ENCODE measurements at regions of chr12 and their contacts with region 1.

Region 1: DNA sequence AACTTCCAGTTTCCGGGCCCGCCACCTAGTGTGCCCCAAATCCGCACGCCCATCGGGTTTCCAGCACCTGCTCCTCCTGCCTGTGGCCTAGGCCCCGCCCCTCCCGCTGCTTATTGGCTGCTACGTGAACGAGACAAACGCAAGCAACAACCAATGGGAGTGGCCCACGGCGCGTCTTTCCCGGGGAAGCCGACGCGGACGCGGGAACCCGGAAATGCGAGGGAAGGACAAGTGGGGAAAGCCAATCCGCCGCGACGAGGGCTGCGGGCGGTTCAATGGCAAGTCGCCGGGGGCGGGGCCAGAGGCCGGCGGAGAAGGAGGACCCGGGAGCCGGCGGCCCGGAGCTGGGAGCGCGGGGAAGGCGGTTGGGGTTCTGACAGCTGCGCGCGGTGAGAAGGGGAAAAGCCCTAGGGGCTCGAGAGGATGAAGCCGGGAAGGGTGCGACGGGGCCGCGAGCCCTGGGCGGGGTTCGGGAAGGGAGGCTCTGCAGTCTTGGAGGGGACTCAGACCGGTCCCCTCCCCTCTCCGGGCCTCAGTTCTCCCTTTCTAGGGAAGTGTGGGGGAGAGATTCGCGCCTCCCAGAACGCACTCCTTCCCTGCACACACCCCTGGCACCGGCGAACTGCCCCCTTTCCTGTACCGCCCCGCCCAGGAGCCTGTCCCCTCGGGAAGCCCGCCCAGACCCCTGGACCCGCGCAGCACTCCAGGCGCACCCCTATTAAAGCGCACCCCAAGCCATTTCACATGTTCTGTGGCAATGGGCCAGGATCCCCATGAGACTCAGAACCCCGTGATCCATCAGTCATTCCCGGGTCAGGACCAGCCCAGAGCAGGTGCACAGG is at the start of gene FICD:
- DNase-seq: peak; percentile 99
- H3K4me3 Mint-ChIP-seq: peak within 1 kb of the TSS; percentile 90
- H3K27ac Mint-ChIP-seq: peak within 1 kb of the TSS; percentile 57
- H3K4me1 Mint-ChIP-seq: peaks cover 22% of the 10 kb centered on the region
- H3K27me3 Mint-ChIP-seq: no peaks in the 10 kb centered on the region
- CTCF ChIP-seq: no peak
- total RNA-seq, gene FICD: 14.3 and 15.2 TPM in 2 replicates

Region 2: DNA sequence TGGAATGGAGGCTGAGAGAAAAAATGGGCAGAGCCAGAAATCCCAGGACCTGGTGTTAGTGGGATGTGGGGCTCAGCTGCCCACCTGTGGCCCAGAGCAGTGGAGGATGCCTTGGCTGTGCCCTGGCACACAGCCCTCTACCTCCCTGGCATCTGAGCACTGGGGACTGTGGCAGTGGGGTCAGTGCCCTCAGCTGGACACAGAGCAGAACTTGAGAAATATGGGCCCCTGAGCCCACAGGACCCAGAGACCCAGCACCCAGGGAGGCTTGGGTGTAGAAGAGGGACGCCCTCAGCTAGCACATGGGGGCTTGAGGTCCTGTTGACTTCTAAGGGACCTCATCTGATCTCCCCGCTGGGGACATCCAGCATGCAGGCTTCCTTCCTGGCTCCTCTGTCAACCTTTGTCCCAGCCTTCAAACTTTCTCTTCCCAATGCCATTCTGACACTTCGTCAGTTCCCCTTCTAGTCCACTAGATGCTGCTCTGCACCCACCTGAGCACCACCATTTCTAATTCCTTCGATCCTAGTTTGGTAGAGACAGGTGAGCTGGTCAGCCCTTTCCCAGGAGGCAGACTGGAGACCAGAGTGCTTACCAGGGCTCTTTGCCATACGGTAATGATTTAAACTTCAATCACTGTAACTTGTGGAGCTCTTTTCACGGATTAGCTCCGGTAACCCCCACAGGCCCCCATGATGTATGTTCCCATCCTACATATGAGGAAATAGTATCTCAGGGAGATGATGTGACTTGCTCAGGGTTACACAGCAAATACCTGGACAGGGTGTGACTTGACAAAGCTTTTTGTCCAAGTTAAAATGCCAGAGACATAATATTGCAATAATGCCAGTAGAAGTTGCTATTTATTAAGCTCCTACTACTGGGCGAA is 597.0 kb before region 1 on chr12:
- CTCF ChIA-PET with region 1: interaction called, 51 read pairs
- POLR2A ChIA-PET with region 1: interaction called, 3 read pairs
- intact Hi-C with region 1: loop called (anchors 1 kb)
- DNase-seq: peak; percentile 46
- H3K4me3 Mint-ChIP-seq: no peak overlapping the region
- H3K27ac Mint-ChIP-seq: no peak overlapping the region
- H3K4me1 Mint-ChIP-seq: no peaks in the 10 kb centered on the region
- H3K27me3 Mint-ChIP-seq: peaks cover 19% of the 10 kb centered on the region
- CTCF ChIP-seq: peak; percentile 61

Region 3: DNA sequence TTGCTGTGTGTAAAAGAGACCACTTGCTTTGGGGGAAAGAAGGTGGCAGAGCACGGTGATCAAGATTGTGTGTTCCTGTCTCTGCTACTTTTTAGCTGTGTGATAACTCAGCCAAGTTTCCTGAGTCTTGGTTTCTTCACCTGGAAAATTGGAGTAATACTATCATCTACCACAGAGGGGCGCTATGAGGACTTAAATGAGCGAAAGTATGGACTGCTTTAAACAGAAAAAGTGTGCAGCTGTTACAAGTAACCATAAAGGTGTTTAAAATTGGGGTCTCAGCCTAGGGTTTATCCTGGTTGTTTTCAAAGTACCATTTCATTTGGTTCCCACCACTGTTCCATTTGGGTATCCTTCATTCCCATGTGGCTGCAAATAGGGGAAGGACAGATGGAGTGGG is 452.0 kb before region 1 on chr12:
- CTCF ChIA-PET with region 1: interaction called, 4 read pairs
- POLR2A ChIA-PET with region 1: no interaction called
- intact Hi-C with region 1: loop called (anchors 5 kb)
- DNase-seq: peak; percentile 33
- H3K4me3 Mint-ChIP-seq: no peak overlapping the region
- H3K27ac Mint-ChIP-seq: no peak overlapping the region
- H3K4me1 Mint-ChIP-seq: no peaks in the 10 kb centered on the region
- H3K27me3 Mint-ChIP-seq: no peaks in the 10 kb centered on the region
- CTCF ChIP-seq: peak; percentile 26

Region 4: DNA sequence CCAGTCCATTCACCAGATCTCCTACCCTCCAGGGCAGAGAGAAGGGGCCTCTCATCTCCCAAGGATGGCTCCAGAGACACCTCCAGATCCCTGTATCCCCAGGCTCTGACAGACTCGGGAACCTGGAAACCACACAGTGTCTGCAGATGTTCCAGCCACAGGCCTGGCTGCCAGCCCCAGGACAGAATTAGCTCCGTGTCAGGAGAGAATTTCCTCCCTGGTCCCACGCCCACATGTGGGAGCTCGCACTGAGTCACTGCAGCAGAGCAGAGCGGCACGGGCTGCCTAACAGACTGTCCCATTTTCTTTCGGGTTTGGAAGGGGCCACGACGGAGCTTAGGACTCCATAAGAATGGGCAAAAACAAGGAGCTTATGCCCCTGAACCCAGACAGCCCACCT is 209.7 kb before region 1 on chr12:
- CTCF ChIA-PET with region 1: no interaction called
- POLR2A ChIA-PET with region 1: no interaction called
- intact Hi-C with region 1: loop called (anchors 2 kb)
- DNase-seq: peak; percentile 91
- H3K4me3 Mint-ChIP-seq: peak overlapping the region; percentile 66
- H3K27ac Mint-ChIP-seq: peak overlapping the region; percentile 46
- H3K4me1 Mint-ChIP-seq: peaks cover 44% of the 10 kb centered on the region
- H3K27me3 Mint-ChIP-seq: no peaks in the 10 kb centered on the region
- CTCF ChIP-seq: no peak

Region 5: GRCh38 chr12:108457006-108457733 is 58.0 kb before region 1 on chr12:
- CTCF ChIA-PET with region 1: interaction called, 10 read pairs
- POLR2A ChIA-PET with region 1: no interaction called
- intact Hi-C with region 1: loop called (anchors 1 kb)
- DNase-seq: peak; percentile 76
- H3K4me3 Mint-ChIP-seq: no peak overlapping the region
- H3K27ac Mint-ChIP-seq: no peak overlapping the region
- H3K4me1 Mint-ChIP-seq: no peaks in the 10 kb centered on the region
- H3K27me3 Mint-ChIP-seq: peaks cover 37% of the 10 kb centered on the region
- CTCF ChIP-seq: peak; percentile 60

Region 6: GRCh38 chr12:108542320-108542719 is 27.1 kb after region 1 on chr12:
- CTCF ChIA-PET with region 1: no interaction called
- POLR2A ChIA-PET with region 1: no interaction called
- intact Hi-C with region 1: no loop called
- DNase-seq: no peak
- H3K4me3 Mint-ChIP-seq: no peak overlapping the region
- H3K27ac Mint-ChIP-seq: no peak overlapping the region
- H3K4me1 Mint-ChIP-seq: peaks cover 8% of the 10 kb centered on the region
- H3K27me3 Mint-ChIP-seq: no peaks in the 10 kb centered on the region
- CTCF ChIP-seq: no peak

Region 7: GRCh38 chr12:108570743-108571608 is 55.8 kb after region 1 on chr12:
- CTCF ChIA-PET with region 1: no interaction called
- POLR2A ChIA-PET with region 1: no interaction called
- intact Hi-C with region 1: no loop called
- DNase-seq: peak; percentile 33
- H3K4me3 Mint-ChIP-seq: no peak overlapping the region
- H3K27ac Mint-ChIP-seq: no peak overlapping the region
- H3K4me1 Mint-ChIP-seq: peaks cover 4% of the 10 kb centered on the region
- H3K27me3 Mint-ChIP-seq: peaks cover 14% of the 10 kb centered on the region
- CTCF ChIP-seq: peak; percentile 17

Measured in MCF 10A (cell line).